ENCODE measurements at regions of chr1 and their contacts with region 1.

Region 1: DNA sequence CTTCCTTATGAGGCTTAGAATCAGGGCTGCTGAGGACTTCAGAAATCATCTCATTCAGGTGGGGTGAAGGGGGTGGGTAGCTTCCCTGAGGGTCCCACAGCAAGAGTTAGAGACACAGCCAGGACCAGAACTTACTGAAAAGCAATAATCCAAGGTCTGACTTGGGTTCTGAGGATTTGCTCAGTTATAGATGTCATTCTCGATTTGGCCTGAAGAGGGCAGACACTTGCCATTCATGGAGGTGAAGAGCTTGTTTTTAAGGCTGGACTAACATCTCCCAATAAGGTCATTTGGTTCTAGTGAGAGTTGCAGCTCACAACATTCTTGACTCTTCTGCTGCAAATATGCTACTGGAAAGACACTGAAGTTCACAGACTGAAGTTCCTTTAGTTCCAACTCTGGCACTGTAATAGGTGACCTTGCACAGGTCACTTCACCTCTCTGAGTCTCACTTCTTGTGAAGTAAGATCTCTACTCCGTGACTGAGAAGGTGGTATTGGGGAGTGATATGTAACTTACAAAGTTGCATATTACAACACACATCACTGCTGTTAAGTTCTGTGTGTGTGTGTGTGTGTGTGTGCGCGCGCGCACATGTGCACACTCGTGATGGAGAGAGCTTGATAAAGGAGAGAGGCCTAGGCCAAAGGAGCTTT is 69.8 kb upstream of the DIRAS3 start:
- DNase-seq: peak in 4 of 5 donors; percentile 25 to 72 (median 48)
- H3K4me3 ChIP-seq: no peak overlapping the region
- H3K27ac ChIP-seq: peak overlapping the region in 1 of 2 donors; percentile 3
- H3K4me1 ChIP-seq: no peaks in the 10 kb centered on the region
- H3K27me3 ChIP-seq: no peaks in the 10 kb centered on the region
- CTCF ChIP-seq: peak; percentile 65 to 90 (median 88)
- EP300 ChIP-seq: no peak
- POLR2A ChIP-seq: peak; percentile 10

Region 2: GRCh38 chr1:67535474-67535873 is 584.8 kb before region 1 on chr1:
- intact Hi-C with region 1: loop called (anchors 10 kb)
- DNase-seq: peak; percentile 75 to 88 (median 85)
- H3K4me3 ChIP-seq: no peak overlapping the region
- H3K27ac ChIP-seq: no peak overlapping the region
- H3K4me1 ChIP-seq: no peaks in the 10 kb centered on the region
- H3K27me3 ChIP-seq: no peaks in the 10 kb centered on the region
- CTCF ChIP-seq: peak; percentile 80 to 94 (median 91)
- EP300 ChIP-seq: no peak
- POLR2A ChIP-seq: no peak

Region 3: GRCh38 chr1:67760030-67760821 is 360.0 kb before region 1 on chr1:
- intact Hi-C with region 1: loop called in 2 of 4 experiments (anchors 10 kb)
- DNase-seq: peak; percentile 37 to 66 (median 63)
- H3K4me3 ChIP-seq: no peak overlapping the region
- H3K27ac ChIP-seq: no peak overlapping the region
- H3K4me1 ChIP-seq: peaks cover 7% of the 10 kb centered on the region
- H3K27me3 ChIP-seq: no peaks in the 10 kb centered on the region
- CTCF ChIP-seq: peak; percentile 52 to 84 (median 79)
- EP300 ChIP-seq: no peak
- POLR2A ChIP-seq: no peak

Region 4: GRCh38 chr1:67889953-67890567 is 230.2 kb before region 1 on chr1:
- intact Hi-C with region 1: no loop called
- DNase-seq: no peak
- H3K4me3 ChIP-seq: no peak overlapping the region
- H3K27ac ChIP-seq: no peak overlapping the region
- H3K4me1 ChIP-seq: no peaks in the 10 kb centered on the region
- H3K27me3 ChIP-seq: no peaks in the 10 kb centered on the region
- CTCF ChIP-seq: no peak
- EP300 ChIP-seq: no peak
- POLR2A ChIP-seq: no peak

Region 5: GRCh38 chr1:68093737-68094136 is 26.5 kb before region 1 on chr1:
- intact Hi-C with region 1: no loop called
- DNase-seq: no peak
- H3K4me3 ChIP-seq: no peak overlapping the region
- H3K27ac ChIP-seq: no peak overlapping the region
- H3K4me1 ChIP-seq: no peaks in the 10 kb centered on the region
- H3K27me3 ChIP-seq: no peaks in the 10 kb centered on the region
- CTCF ChIP-seq: no peak
- EP300 ChIP-seq: no peak
- POLR2A ChIP-seq: no peak

Region 6: DNA sequence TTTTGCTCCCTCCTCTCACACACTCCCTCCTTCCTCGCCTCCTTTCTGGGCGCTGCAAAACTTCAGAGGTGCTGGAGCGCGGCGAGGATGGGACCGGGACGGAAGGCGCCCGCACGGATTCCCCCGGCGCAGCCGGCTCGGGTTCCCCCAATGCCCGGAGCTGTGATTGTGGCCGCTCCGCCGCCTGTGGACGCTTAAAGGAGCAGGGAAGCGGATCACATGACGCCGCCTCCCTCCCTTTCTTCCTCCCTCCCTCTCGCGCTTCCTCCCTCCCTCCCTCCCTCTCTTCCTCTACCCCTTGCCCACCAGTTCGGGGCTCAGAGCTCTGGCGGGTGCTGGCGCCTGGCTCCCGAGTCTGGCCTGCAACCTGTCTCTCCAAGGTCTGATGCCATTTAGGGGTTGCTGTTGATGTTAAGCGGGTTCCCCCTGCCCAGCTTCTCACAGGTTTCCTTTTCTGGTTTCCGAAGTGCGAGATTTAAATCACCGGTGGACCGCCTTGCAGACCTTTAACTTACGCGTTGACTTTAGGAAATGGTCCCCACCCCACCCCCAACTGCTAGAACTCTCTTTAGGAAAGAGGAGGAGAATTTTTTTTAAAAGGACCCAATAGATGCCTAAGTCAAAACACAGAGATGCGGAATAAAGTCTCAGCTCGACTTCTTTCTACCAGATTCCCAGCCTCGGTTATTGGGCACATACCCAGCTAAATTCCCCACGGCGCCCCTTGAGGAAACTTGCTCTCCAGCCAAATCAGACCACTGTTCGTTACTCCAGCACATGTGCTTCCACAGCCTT is 112.3 kb after region 1 on chr1 and contains the start of gene WLS:
- intact Hi-C with region 1: loop called in 3 of 4 experiments (anchors 2 to 10 kb)
- DNase-seq: peak; percentile 85 to 88 (median 87)
- H3K4me3 ChIP-seq: peak within 1 kb of the TSS; percentile 78
- H3K27ac ChIP-seq: peak within 1 kb of the TSS; percentile 73 to 86
- H3K4me1 ChIP-seq: peaks cover 7% of the 10 kb centered on the region
- H3K27me3 ChIP-seq: no peaks in the 10 kb centered on the region
- CTCF ChIP-seq: peak in 1 of 3 donors; percentile 46
- EP300 ChIP-seq: no peak
- POLR2A ChIP-seq: peak; percentile 85
- total RNA-seq, gene WLS: 42.2 to 168 (median 120) TPM

Region 7: DNA sequence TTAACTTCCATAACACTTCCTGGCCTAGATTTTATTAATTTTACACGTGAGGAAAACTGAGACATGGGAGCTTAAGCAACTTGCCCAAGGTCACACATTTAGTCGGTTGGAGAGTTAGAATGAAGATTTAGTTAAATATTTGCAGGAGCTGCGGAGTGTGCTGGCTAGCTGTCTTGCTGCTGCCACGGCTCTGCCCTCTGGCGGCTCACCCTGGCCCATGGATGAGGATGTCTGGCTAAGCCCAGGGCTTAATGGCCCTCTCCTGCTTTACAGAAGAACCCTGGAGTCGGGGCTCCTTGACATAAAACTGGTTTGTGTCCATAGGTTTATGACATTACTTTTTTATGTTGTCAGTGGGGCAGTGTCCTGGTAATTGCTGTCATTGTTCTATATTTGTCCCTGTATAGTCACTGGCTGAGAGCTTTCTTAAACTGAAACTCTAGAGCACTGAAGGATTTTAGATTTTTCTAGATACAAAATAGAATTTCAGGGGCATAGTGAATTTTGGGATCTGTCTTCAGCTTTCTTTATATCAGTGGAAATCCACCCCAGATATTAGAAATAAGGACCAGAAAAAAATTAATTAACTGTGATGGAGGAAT is 200.9 kb after region 1 on chr1:
- intact Hi-C with region 1: loop called in 1 of 4 experiments (anchors 5 kb)
- DNase-seq: peak; percentile 73 to 81 (median 76)
- H3K4me3 ChIP-seq: no peak overlapping the region
- H3K27ac ChIP-seq: peak overlapping the region in 1 of 2 donors; percentile 41
- H3K4me1 ChIP-seq: peaks cover 11% of the 10 kb centered on the region
- H3K27me3 ChIP-seq: no peaks in the 10 kb centered on the region
- CTCF ChIP-seq: peak; percentile 33 to 61 (median 49)
- EP300 ChIP-seq: no peak
- POLR2A ChIP-seq: no peak

Region 8: DNA sequence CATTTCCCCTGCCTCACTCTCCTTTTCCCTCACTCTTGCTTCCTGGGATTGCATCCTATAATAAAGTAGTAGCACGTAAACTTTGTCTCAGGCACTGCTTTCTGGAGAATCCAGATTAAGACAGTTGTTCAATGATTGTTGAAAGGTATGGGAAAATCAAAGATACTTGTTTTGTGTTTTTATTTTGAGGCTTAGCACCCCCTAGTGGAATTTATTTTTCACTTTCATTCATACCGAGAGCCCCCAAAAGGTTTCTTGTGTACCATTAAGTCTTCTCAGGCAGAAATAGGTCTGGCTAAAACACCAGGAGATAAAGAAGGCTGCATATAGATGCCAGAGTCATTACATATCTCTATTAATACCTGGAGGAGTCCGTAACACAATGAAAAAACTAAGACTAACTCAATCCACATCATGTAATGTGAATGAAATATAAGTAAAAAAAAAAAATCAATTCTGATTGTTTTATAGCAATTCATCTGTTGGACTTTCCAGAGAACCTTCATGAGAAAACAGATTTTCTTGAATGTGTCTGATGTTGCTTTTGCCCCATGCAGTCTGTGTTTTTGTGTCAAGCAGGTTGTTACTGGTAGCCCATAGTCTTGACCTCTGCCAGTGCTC is 226.0 kb after region 1 on chr1:
- intact Hi-C with region 1: loop called (anchors 2 to 5 kb)
- DNase-seq: no peak
- H3K4me3 ChIP-seq: no peak overlapping the region
- H3K27ac ChIP-seq: no peak overlapping the region
- H3K4me1 ChIP-seq: no peaks in the 10 kb centered on the region
- H3K27me3 ChIP-seq: no peaks in the 10 kb centered on the region
- CTCF ChIP-seq: peak in 2 of 3 donors; percentile 26 to 53
- EP300 ChIP-seq: no peak
- POLR2A ChIP-seq: no peak

Region 9: DNA sequence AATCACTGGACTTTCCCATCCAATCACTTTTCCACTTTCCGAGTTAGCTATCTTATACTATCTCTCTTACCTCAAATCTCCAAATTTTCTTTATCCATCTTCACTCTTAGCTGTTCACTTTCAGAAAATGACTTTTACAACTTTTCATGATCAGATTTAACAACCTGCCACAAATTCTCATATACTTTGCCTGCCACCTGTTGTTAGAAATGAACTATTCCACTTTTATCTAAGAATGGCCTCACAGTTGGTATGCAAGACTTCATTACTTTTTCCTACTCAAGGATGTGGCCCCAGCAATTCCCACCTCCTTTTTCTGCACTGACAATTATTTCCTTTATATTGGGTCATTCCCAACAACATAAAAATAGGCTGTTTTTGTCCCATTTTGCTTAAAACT is 470.2 kb after region 1 on chr1:
- intact Hi-C with region 1: no loop called
- DNase-seq: no peak
- H3K4me3 ChIP-seq: no peak overlapping the region
- H3K27ac ChIP-seq: no peak overlapping the region
- H3K4me1 ChIP-seq: no peaks in the 10 kb centered on the region
- H3K27me3 ChIP-seq: no peaks in the 10 kb centered on the region
- CTCF ChIP-seq: no peak
- EP300 ChIP-seq: no peak
- POLR2A ChIP-seq: no peak

Measured in ovary (tissue), 10 donors.